ENCODE measurements at regions of chr3 and their contacts with region 1.

Region 1: DNA sequence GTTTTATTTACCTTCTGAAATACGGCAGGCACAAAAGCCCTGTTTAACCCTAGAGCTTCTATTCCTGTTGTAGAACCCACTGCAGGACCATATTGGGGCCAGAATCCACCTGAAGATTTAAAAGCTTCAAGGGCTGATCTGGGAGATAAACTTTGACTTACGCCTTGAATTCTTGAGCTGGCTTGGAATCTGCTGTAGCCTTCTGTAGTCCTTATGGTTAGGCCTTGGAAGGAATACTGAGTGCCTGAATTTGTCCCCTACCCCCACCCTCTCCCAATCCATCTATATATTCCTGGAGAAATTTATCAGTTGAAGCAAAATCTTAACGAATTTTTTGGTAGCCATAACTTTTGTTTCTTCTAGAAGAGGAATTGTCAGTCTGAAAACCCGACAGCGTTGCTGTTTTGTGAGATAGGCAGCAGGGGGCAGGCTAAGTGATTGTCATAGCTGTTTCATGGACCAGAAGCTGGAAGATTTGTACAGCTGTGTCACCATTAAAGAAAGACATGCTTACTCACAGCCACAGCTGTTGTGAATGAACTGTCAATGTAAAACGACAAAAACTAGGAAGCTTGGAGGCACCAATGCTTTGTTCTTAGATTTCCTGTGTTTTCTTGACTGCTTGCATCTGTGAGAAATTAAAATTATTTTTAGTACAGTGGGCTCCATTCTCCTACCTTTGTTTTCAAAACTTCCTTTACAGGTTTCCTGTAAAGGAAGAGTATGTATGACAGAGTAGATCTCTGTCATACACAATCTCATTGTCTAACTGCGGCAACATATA is 12.8 kb downstream of the LXN start:
- DNase-seq: peak in 1 of 2 donors; percentile 55
- ATAC-seq: peak; percentile 88

Region 2: DNA sequence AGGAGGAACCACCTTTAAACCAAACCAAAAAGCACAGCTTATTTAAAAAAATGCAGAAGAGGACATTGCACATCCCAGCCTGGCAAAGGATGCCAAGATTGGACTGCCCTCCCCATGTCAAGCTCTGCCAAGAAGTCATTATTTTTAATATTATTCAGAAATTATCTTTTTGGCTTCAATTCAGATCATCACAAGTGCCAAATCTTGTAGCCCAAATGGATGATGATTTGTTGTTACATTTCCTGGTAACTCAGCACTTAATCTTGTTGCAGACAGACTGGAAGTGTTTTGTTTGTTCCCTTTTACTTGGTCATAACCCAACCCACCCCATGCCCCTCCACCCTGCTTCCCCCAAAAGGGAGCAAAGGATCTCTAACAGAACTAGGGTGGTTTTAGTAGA is 40.9 kb after region 1 on chr3:
- intact Hi-C with region 1: no loop called
- DNase-seq: no peak
- ATAC-seq: no peak

Region 3: DNA sequence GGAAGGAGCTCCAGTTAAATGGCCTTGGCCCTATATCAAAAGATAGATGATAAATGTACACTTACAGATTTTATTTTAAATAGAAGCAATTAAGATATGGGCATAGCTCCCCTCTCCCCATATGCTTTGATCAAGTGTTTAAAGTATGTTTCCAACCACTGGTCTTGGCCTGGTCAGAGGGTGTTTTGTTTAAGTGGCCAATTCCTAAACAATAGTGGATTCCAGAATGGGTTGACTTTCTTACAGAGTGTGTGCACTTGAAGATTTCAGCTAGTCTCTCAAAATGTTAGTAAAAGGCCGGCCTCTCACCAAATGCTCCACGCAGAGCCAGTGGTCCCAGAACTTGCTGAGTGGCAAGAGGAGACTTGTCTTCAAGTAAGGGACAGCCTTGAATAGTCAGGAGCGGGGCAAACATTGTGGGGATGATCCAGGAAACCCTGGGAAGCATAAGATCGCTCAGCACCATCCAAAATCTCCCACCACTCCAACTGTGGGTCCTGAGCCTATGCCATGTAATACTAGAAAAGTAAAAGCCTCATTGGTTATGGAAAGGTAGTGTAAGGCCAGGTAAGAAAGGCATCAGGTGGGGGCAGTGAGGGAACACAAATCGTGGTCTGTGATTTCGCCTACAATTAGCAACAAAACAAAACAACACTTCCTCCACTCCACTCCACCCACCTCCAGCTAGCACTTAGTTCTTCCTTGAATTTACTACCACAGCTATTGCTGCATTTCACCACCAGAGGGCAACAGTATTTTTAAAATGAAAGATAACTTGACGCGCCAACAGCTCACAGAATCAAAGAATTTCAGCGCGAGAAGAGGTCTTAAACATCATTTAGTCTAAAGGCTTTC is 67.8 kb after region 1 on chr3:
- intact Hi-C with region 1: loop called in 1 of 2 experiments (anchors 10 kb)
- DNase-seq: peak in 1 of 2 donors; percentile 53
- ATAC-seq: peak; percentile 9

Region 4: DNA sequence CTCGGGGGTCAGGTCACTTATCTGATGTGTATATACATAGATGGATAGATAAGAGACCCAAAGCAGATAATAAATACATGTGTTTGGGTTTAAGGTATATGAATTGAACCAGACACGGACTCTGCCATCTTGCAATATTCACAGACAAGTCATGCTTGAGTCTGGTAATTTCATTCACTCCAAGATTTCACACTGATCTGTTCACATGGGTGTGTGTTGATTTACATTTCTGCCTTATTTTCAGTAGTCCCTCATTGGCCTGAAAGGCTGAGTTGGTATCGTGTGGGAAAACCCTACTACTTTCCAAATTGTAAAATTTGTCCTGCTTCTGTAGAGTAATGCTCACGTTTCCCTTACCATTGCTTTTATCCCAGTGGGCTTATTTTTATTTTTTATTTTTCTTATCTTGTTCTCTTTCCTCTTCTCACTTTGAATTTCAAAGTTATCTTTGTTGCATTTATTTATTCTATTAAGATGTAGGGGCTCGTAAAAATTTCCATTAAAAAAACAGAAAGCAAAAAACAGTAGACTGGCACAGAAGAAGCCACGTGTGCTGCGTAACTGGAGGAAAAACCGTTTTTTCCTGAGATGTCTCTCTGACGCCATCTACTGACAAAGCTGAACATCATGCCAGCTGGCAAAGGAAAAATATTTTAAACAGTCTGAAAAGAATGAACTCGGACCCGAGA is 131.4 kb after region 1 on chr3:
- intact Hi-C with region 1: loop called in 1 of 2 experiments (anchors 5 kb)
- DNase-seq: no peak
- ATAC-seq: peak; percentile 63

Region 5: GRCh38 chr3:158976966-158977365 is 317.3 kb after region 1 on chr3:
- intact Hi-C with region 1: no loop called
- DNase-seq: no peak
- ATAC-seq: no peak

Measured in left colon (tissue), 2 donors.